Ascending aorta (tissue), 2 donors: ENCODE measurements at regions of chr17 and their contacts with region 1.

Region 1: DNA sequence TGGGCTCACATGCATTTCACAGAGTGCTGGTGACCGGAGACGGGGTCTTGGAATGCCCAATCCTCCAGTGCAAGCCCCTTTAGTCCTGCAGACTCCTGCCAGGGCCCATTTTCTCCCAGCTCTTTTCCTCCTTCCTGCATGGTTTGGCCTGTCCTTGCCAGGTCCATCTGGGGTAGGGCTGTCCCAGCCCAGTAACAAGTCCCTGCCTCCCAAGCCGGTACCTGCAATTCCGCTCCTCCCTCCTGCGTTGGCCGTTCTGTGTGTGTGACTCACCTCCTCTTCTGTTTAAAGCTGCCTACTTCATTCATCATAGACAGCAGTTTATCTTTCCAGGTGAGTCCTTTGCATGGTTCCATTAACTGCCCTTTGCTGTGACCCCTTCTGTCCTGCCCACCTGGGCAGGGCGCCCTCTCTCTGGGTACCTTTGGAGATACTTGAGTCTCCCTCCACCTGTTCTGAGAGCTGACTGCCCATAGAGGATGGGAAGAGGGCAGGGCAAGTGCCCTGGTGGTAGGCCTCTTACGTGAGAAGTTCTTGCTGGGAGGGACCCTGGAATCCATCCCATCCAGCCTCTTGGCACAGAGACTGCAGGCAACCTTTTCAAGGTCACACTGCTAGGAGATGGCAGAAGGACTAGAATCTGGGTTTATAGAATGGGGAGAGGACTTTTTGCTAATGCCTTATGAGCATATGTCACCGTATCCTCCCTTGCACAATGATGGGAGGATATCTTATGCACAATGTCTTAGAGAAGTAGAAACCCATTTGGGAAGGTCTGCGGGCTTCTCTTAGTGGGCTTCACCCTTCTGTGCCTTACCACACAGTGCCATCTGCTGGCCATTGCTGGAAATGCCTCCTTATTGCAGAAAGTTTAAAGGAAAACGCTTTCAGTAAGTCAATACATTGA is 29.7 kb upstream of the LGALS9 start:
- DNase-seq: peak in 1 of 2 donors; percentile 88
- H3K4me3 ChIP-seq: no peak overlapping the region
- H3K27ac ChIP-seq: no peak overlapping the region
- H3K4me1 ChIP-seq: peaks cover 0 to 2% of the 10 kb centered on the region in 2 donors
- H3K27me3 ChIP-seq: no peaks in the 10 kb centered on the region
- CTCF ChIP-seq: peak; percentile 82 to 91 (median 85)

Region 2: DNA sequence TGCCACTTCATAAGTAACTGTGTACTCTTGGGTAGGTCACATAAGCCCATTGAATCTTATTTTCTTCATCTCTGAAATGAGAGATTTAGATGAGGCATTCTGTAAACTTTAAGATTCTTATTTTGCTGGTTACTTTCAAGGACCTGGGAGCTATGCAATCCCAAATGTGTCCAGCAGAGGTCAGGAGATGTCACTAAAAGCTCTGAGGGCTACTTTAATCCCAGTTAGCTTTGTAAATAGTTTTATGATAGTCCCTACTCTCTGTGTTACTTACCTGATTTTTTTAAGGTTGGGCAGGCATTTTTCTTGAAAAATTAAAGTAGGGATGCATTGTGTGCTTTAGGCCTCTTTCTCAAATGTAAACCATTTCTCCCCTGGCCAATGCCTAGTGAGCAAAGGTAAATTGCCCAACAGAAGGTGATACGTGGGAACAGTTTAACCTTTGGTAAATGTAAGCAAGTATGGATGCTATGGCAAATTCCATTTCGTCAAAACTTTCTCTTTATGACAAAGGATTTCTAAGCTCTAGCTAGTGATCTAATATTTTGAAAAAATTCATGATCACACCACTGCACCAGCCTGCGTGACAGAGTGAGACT is 364.5 kb before region 1 on chr17:
- intact Hi-C with region 1: loop called (anchors 2 kb)
- DNase-seq: peak in 1 of 2 donors; percentile 94
- H3K4me3 ChIP-seq: no peak overlapping the region
- H3K27ac ChIP-seq: no peak overlapping the region
- H3K4me1 ChIP-seq: peaks cover 0 to 7% of the 10 kb centered on the region in 2 donors
- H3K27me3 ChIP-seq: no peaks in the 10 kb centered on the region
- CTCF ChIP-seq: peak; percentile 87 to 92 (median 89)

Region 3: DNA sequence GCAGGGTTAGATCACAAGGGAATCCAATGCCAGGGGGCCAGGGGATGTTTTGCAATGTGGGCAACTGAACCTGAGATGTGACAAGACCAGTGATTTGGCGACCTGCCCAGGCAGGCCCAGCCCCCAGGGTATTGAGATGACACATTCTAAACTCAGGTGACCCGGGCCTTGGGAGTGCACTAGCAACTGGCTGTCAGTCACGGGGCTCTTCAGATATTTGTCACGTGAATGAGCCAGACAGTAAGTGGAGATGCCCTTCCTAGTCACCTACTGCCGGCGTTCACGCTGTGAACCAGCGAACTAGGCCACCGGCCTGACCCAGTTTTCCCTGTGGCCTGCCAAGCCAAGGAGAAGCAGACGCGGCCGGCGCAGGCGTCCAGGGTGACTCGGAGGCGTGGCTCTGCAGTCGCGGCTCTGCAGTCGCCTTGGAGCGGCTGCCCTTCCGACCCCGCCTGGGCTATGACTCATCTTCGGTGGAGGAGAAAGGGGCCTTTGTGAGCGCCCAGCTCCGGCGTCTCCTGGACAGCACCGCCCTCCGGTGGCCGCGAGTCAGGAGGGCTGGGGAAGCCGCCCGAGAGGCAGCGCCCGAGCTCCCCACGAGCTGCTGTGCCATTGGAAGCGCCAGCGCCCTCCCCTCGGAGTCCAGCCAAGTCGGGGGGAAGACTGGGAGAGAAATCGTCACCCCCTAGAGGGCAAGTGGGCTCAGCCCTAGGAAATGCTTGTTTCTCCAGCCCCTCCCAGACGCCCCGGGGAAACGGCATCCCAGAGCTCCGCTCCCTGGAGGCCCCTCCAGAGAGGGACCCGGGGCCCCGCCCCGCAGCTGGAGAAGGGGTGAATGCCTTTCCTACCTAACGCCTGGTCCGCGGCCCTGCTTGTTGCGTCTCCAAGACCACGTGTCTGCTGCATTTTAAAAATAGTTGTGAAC is 268.6 kb before region 1 on chr17:
- intact Hi-C with region 1: loop called (anchors 5 kb)
- DNase-seq: peak; percentile 95 to 99
- H3K4me3 ChIP-seq: peak overlapping the region; percentile 55 to 57
- H3K27ac ChIP-seq: peak overlapping the region; percentile 92 to 93
- H3K4me1 ChIP-seq: peaks cover 0 to 16% of the 10 kb centered on the region in 2 donors
- H3K27me3 ChIP-seq: no peaks in the 10 kb centered on the region
- CTCF ChIP-seq: peak; percentile 84 to 95 (median 87)

Region 4: GRCh38 chr17:27443491-27443890 is 157.8 kb before region 1 on chr17:
- intact Hi-C with region 1: no loop called
- DNase-seq: no peak
- H3K4me3 ChIP-seq: no peak overlapping the region
- H3K27ac ChIP-seq: no peak overlapping the region
- H3K4me1 ChIP-seq: no peaks in the 10 kb centered on the region
- H3K27me3 ChIP-seq: no peaks in the 10 kb centered on the region
- CTCF ChIP-seq: no peak

Region 5: DNA sequence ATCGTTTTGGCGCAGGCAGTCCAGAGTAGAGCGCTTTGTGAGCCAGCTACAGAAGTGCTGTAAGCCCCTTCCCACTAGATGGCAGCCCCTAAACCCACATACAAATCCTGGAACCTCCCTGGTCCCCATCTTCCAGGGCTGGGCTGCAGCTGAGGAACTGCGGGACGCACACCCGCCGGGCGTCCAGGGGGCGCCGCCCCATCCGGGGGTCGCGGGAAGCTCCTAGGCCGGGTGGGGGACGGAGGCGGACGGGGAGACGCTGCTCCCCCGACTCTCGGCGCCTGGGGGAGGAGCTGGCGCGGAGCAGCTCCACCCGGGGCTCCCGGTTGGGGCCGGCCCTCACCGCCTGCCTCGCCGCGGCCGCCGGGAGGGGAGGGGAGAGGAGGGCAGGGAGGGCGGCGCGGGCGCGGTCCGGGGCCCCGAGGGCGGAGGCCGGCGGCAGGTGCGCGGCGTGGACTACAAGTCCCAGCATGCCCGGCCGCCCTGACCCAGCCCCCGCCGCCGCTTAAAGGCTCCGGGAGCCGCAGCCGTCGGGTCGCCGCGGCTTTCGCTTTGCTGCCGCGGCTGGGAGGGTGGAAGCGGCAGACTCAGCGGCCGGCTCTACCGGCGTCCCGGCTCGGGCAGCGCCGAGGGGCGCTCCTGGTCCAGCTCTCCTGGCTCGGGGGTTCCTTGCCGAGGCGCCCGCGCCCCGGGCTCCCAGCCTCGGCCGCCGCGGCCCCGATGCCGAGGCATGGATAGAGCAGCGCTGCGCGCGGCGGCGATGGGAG is 145.2 kb before region 1 on chr17 and contains the start of gene KSR1:
- intact Hi-C with region 1: loop called (anchors 2 kb)
- DNase-seq: peak; percentile 49 to 87
- H3K4me3 ChIP-seq: peak within 1 kb of the TSS; percentile 93
- H3K27ac ChIP-seq: peak within 1 kb of the TSS; percentile 90 to 91
- H3K4me1 ChIP-seq: peaks cover 0 to 12% of the 10 kb centered on the region in 2 donors
- H3K27me3 ChIP-seq: no peaks in the 10 kb centered on the region
- CTCF ChIP-seq: peak; percentile 14 to 36 (median 25)
- total RNA-seq, gene KSR1: 42.6 TPM

Region 6: GRCh38 chr17:27559506-27560481 is 41.5 kb before region 1 on chr17:
- intact Hi-C with region 1: loop called (anchors 5 kb)
- DNase-seq: peak in 1 of 2 donors; percentile 76
- H3K4me3 ChIP-seq: peak overlapping the region in 1 of 2 donors; percentile 28
- H3K27ac ChIP-seq: peak overlapping the region; percentile 31 to 53
- H3K4me1 ChIP-seq: peaks cover 0 to 6% of the 10 kb centered on the region in 2 donors
- H3K27me3 ChIP-seq: no peaks in the 10 kb centered on the region
- CTCF ChIP-seq: no peak

Region 7: GRCh38 chr17:27572665-27573064 is 28.7 kb before region 1 on chr17:
- intact Hi-C with region 1: no loop called
- DNase-seq: no peak
- H3K4me3 ChIP-seq: no peak overlapping the region
- H3K27ac ChIP-seq: no peak overlapping the region
- H3K4me1 ChIP-seq: no peaks in the 10 kb centered on the region
- H3K27me3 ChIP-seq: no peaks in the 10 kb centered on the region
- CTCF ChIP-seq: no peak

Region 8: GRCh38 chr17:27892866-27893769 is 291.8 kb after region 1 on chr17 and contains the start of gene LYRM9:
- intact Hi-C with region 1: loop called (anchors 10 kb)
- DNase-seq: peak; percentile 62 to 96
- H3K4me3 ChIP-seq: peak within 1 kb of the TSS; percentile 76 to 98
- H3K27ac ChIP-seq: peak within 1 kb of the TSS; percentile 62 to 88
- H3K4me1 ChIP-seq: peaks cover 0 to 9% of the 10 kb centered on the region in 2 donors
- H3K27me3 ChIP-seq: no peaks in the 10 kb centered on the region
- CTCF ChIP-seq: peak; percentile 72 to 92 (median 82)
- total RNA-seq, gene LYRM9: 22.2 TPM